HCT116 (cell line): ENCODE measurements at regions of chr7 and their contacts with region 1.

Region 1: GRCh38 chr7:127404286-127405072 is 12.0 kb upstream of the ZNF800 start:
- DNase-seq: no peak
- ATAC-seq: no peak
- H3K4me3 ChIP-seq: no peak overlapping the region
- H3K27ac ChIP-seq: no peak overlapping the region
- H3K4me1 ChIP-seq: no peaks in the 10 kb centered on the region
- H3K27me3 ChIP-seq: peaks cover 35% of the 10 kb centered on the region
- CTCF ChIP-seq: no peak
- POLR2A ChIP-seq: no peak
- RAD21 ChIP-seq: no peak

Region 2: GRCh38 chr7:127337581-127337980 is 66.9 kb before region 1 on chr7:
- CTCF ChIA-PET with region 1: no interaction called
- POLR2A ChIA-PET with region 1: no interaction called
- RAD21 ChIA-PET with region 1: no interaction called
- intact Hi-C with region 1: no loop called
- DNase-seq: no peak
- ATAC-seq: no peak
- H3K4me3 ChIP-seq: no peak overlapping the region
- H3K27ac ChIP-seq: no peak overlapping the region
- H3K4me1 ChIP-seq: no peaks in the 10 kb centered on the region
- H3K27me3 ChIP-seq: peaks cover 8% of the 10 kb centered on the region
- CTCF ChIP-seq: no peak
- POLR2A ChIP-seq: no peak
- RAD21 ChIP-seq: no peak

Region 3: DNA sequence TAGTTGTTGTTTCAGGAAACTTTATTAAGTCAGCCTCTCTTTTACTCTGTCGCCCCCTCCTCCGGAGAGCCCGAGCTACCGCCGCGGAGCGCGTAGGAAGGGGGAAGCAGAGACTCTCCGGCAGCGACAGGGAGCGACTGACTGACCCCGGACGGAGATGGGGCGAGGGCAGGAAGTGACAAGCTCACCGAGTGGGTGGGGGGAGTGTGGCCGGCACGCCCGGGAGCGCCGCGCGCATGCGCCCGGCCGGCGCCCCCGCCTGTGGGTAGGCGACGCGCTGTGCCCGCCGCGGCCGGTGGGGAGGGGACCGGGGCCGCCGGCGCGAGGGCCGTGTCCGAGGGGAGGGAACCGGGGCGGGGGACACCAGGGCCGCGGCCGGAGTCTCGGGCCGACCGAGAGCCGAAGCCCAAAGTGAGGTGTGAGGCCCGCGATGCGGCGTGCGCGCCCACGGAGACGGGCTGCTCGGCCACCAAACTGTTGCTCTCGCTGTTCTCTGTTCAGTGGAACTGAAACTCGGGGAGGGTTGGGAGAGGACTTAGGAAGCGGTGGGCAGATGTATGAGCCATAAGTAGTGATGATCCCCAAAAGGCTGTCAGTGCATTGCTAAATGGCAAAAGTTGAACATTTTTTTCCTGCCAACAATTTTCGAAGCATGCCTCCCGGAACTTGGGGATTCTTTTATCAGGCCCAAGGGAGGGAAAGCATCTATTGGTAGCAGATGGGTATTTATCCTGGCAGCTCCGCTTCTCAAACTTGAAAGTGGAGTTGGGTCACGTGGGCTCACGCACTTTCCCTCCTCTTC is 11.7 kb before region 1 on chr7 and contains the start of gene ZNF800:
- CTCF ChIA-PET with region 1: no interaction called
- POLR2A ChIA-PET with region 1: no interaction called
- RAD21 ChIA-PET with region 1: no interaction called
- intact Hi-C with region 1: no loop called
- DNase-seq: peak; percentile 69
- ATAC-seq: peak; percentile 91
- H3K4me3 ChIP-seq: peak within 1 kb of the TSS; percentile 78 to 82
- H3K27ac ChIP-seq: peak within 1 kb of the TSS; percentile 57
- H3K4me1 ChIP-seq: peaks cover 4 to 13% of the 10 kb centered on the region in 2 experiments; a peak in 3 of 4 replicates
- H3K27me3 ChIP-seq: no peaks in the 10 kb centered on the region
- CTCF ChIP-seq: no peak
- POLR2A ChIP-seq: peak; percentile 25
- RAD21 ChIP-seq: no peak
- total RNA-seq, gene ZNF800: 30.9 TPM

Region 4: GRCh38 chr7:127514499-127514898 is 110.0 kb after region 1 on chr7:
- CTCF ChIA-PET with region 1: no interaction called
- POLR2A ChIA-PET with region 1: no interaction called
- RAD21 ChIA-PET with region 1: no interaction called
- intact Hi-C with region 1: no loop called
- DNase-seq: peak; percentile 29
- ATAC-seq: peak; percentile 89
- H3K4me3 ChIP-seq: no peak overlapping the region
- H3K27ac ChIP-seq: no peak overlapping the region
- H3K4me1 ChIP-seq: no peaks in the 10 kb centered on the region
- H3K27me3 ChIP-seq: peaks cover 60% of the 10 kb centered on the region
- CTCF ChIP-seq: peak; percentile 43 to 56 (median 45); a peak in 4 of 6 replicates
- POLR2A ChIP-seq: no peak
- RAD21 ChIP-seq: peak; percentile 71

Region 5: DNA sequence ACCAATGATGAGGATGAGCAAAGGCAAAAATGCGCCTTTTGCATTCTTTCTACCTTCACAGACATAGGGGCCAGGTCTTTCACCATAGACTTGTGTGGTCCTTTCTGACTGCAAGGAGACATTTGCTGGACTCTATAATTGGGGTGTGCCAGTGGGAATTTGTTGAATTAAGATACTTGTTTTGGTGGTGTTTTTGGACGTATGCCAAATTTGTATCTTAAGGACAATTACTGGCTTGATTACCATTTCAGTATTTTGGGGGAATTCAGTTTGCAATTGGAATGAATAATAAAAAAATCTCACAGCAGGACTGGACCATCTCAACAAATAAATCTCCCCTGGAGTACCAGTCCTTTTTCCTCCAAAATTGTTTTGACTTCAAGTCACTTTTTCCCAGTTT is 295.4 kb after region 1 on chr7:
- CTCF ChIA-PET with region 1: no interaction called
- POLR2A ChIA-PET with region 1: no interaction called
- RAD21 ChIA-PET with region 1: no interaction called
- intact Hi-C with region 1: loop called (anchors 1 kb)
- DNase-seq: no peak
- ATAC-seq: no peak
- H3K4me3 ChIP-seq: no peak overlapping the region
- H3K27ac ChIP-seq: no peak overlapping the region
- H3K4me1 ChIP-seq: no peaks in the 10 kb centered on the region
- H3K27me3 ChIP-seq: no peaks in the 10 kb centered on the region
- CTCF ChIP-seq: no peak
- POLR2A ChIP-seq: no peak
- RAD21 ChIP-seq: no peak